ENCODE measurements at regions of chr10 and their contacts with region 1.

Region 1: GRCh38 chr10:84563868-84564267 is 235.5 kb downstream of the CCSER2 start:
- DNase-seq: no peak
- H3K4me3 ChIP-seq: no peak overlapping the region
- H3K27ac ChIP-seq: no peak overlapping the region
- H3K27me3 ChIP-seq: peaks cover 0 to 27% (median 3%) of the 10 kb centered on the region in 45 donors
- CTCF ChIP-seq: no peak

Region 2: GRCh38 chr10:83771675-83772074 is 792.2 kb before region 1 on chr10:
- intact Hi-C with region 1: loop called in 1 of 2 experiments (anchors 10 kb)
- DNase-seq: no peak
- H3K4me3 ChIP-seq: no peak overlapping the region
- H3K27ac ChIP-seq: no peak overlapping the region
- H3K27me3 ChIP-seq: no peaks in the 10 kb centered on the region
- CTCF ChIP-seq: no peak

Region 3: GRCh38 chr10:84715911-84716310 is 152.0 kb after region 1 on chr10:
- intact Hi-C with region 1: no loop called
- DNase-seq: no peak
- H3K4me3 ChIP-seq: no peak overlapping the region
- H3K27ac ChIP-seq: no peak overlapping the region
- H3K27me3 ChIP-seq: peaks cover 0 to 7% (median 0%) of the 10 kb centered on the region in 45 donors
- CTCF ChIP-seq: peak in 45 of 56 donors; percentile 11 to 47 (median 33)

Measured in dorsolateral prefrontal cortex (tissue), 120 donors.